B cell (primary cell): ENCODE measurements at regions of chr18 and their contacts with region 1.

Region 1: GRCh38 chr18:28666216-28666615 is 489.3 kb upstream of the CDH2 start:
- DNase-seq: no peak
- ATAC-seq: no peak
- H3K4me3 ChIP-seq: no peak overlapping the region
- H3K4me3 Mint-ChIP-seq: no peak overlapping the region
- H3K27ac ChIP-seq: no peak overlapping the region
- H3K27ac Mint-ChIP-seq: no peak overlapping the region
- H3K4me1 ChIP-seq: no peaks in the 10 kb centered on the region
- H3K4me1 Mint-ChIP-seq: no peaks in the 10 kb centered on the region
- H3K27me3 ChIP-seq: no peaks in the 10 kb centered on the region
- H3K27me3 Mint-ChIP-seq: no peaks in the 10 kb centered on the region
- CTCF ChIP-seq: no peak

Region 2: DNA sequence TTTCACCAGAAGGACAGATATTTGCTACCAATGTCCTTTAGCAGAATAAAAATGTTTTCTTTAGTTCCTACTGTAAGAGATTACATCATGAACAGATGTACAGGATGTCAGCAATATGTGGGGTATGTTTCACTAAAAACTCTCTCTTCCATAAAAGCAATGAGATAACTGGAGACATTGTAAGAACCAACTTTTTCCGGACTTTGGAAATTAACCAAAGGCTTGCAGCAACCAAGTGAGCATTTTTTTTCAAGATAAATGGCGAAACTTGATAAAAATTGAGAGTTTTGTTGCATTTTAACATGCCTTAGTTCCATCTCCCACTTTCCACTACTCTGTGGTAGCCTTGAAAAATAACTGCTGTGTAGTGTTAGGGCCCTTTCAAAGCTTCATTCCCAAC is 59.5 kb before region 1 on chr18:
- CTCF ChIA-PET with region 1: no interaction called
- POLR2A ChIA-PET with region 1: no interaction called
- intact Hi-C with region 1: loop called (anchors 10 kb)
- DNase-seq: no peak
- ATAC-seq: no peak
- H3K4me3 ChIP-seq: no peak overlapping the region
- H3K4me3 Mint-ChIP-seq: no peak overlapping the region
- H3K27ac ChIP-seq: no peak overlapping the region
- H3K27ac Mint-ChIP-seq: no peak overlapping the region
- H3K4me1 ChIP-seq: no peaks in the 10 kb centered on the region
- H3K4me1 Mint-ChIP-seq: no peaks in the 10 kb centered on the region
- H3K27me3 ChIP-seq: no peaks in the 10 kb centered on the region
- H3K27me3 Mint-ChIP-seq: no peaks in the 10 kb centered on the region
- CTCF ChIP-seq: no peak